ENCODE measurements at regions of chr3 and their contacts with region 1.

Region 1: DNA sequence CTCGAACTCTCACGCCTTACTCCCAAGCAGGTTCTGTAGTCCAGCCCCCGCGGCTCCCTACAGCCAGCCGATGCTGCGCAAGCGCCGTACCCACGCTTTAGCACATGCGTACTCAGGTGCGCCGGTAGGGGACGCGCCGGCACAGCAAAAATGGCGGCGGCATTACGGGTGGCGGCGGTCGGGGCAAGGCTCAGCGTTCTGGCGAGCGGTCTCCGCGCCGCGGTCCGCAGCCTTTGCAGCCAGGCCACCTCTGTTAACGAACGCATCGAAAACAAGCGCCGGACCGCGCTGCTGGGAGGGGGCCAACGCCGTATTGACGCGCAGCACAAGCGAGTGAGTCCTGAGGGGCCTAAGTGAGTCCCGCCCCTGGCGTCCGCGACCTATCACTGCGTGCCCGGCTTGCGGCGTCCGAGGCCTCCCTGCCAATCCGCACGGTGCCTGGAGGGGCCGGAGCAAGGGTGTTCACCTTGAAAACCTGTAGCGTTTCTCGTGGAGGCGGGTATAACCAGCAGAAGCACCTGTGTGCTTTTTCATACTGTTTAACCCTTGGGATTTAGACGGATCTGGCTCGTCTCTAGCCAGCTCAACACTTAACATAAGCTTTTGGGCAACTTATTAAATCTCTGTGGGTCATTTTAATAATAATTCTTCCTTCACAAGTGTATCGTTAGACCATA is at the start of gene PCCB:
- DNase-seq: peak; percentile 97 to 98
- H3K4me3 ChIP-seq: peak within 1 kb of the TSS; percentile 11 to 79 (median 14)
- H3K27ac ChIP-seq: peak within 1 kb of the TSS; percentile 63 to 91 (median 87)
- H3K4me1 ChIP-seq: peaks cover 13 to 16% of the 10 kb centered on the region in 2 donors
- H3K27me3 ChIP-seq: no peaks in the 10 kb centered on the region
- CTCF ChIP-seq: peak; percentile 62 to 90 (median 84)
- POLR2A ChIP-seq: peak; percentile 25 to 87
- total RNA-seq, gene PCCB: 31.2 to 95.8 (median 60.3) TPM

Region 2: DNA sequence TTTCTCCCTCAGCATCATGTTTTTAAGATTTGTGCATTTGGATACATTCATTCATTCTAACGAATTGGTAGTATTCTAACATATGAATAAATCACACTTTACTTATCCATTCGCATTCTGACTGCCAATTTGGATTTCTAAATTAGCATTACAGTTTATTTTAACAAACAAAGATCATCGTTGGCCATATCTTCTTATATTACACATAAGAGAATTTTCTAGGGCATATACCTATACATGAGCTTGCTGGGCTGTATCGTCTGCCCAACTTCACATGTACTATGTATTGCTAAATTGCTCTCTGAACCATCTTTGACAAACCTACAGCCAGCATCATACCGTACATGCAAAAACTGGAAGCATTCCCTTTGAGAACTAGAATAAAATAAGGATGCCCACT is 550.6 kb before region 1 on chr3:
- intact Hi-C with region 1: no loop called
- DNase-seq: no peak
- H3K4me3 ChIP-seq: no peak overlapping the region
- H3K27ac ChIP-seq: no peak overlapping the region
- H3K4me1 ChIP-seq: no peaks in the 10 kb centered on the region
- H3K27me3 ChIP-seq: no peaks in the 10 kb centered on the region
- CTCF ChIP-seq: no peak
- POLR2A ChIP-seq: no peak

Region 3: GRCh38 chr3:136196401-136197158 is 53.8 kb before region 1 on chr3:
- intact Hi-C with region 1: loop called (anchors 5 kb)
- DNase-seq: peak; percentile 99
- H3K4me3 ChIP-seq: peak overlapping the region in 2 of 3 donors; percentile 72 to 78
- H3K27ac ChIP-seq: peak overlapping the region; percentile 99 to 100 (median 100)
- H3K4me1 ChIP-seq: peaks cover 23% of the 10 kb centered on the region in 2 donors
- H3K27me3 ChIP-seq: no peaks in the 10 kb centered on the region
- CTCF ChIP-seq: no peak
- POLR2A ChIP-seq: peak; percentile 11 to 89

Measured in thyroid gland (tissue), 4 donors.